ENCODE measurements at regions of chr5 and their contacts with region 1.

Region 1: GRCh38 chr5:170809551-170809950 is 26.0 kb downstream of the GABRP start:
- DNase-seq: peak in 1 of 2 experiments; percentile 49
- H3K4me3 ChIP-seq: no peak overlapping the region
- H3K27ac ChIP-seq: no peak overlapping the region
- H3K4me1 ChIP-seq: no peaks in the 10 kb centered on the region
- H3K27me3 ChIP-seq: no peaks in the 10 kb centered on the region
- CTCF ChIP-seq: peak; percentile 76

Region 2: DNA sequence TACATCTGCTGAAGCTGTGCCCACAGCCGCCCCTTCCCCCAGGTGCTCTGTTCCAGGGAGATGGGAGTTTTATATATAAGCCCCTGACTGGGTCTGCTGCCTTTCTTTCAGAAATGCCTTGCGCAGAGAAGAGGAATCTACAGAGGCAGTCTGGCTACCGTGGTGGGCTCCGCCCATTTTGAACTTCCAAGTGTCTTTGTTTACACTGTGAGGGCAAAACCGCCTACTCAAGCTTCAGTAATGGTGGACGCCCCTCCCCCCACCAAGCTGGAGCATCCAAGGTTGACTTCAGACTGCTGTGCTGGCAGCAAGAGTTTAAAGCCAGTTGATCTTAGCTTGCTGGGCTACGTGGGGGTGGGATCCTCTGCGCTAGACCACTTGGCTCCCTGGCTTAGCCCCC is 93.5 kb after region 1 on chr5:
- CTCF ChIA-PET with region 1: no interaction called
- POLR2A ChIA-PET with region 1: no interaction called
- intact Hi-C with region 1: no loop called
- DNase-seq: no peak
- H3K4me3 ChIP-seq: no peak overlapping the region
- H3K27ac ChIP-seq: no peak overlapping the region
- H3K4me1 ChIP-seq: no peaks in the 10 kb centered on the region
- H3K27me3 ChIP-seq: no peaks in the 10 kb centered on the region
- CTCF ChIP-seq: no peak

Region 3: GRCh38 chr5:170917113-170917512 is 107.6 kb after region 1 on chr5:
- CTCF ChIA-PET with region 1: interaction called, 4 read pairs
- POLR2A ChIA-PET with region 1: no interaction called
- intact Hi-C with region 1: loop called (anchors 5 kb)
- DNase-seq: no peak
- H3K4me3 ChIP-seq: no peak overlapping the region
- H3K27ac ChIP-seq: no peak overlapping the region
- H3K4me1 ChIP-seq: no peaks in the 10 kb centered on the region
- H3K27me3 ChIP-seq: no peaks in the 10 kb centered on the region
- CTCF ChIP-seq: peak; percentile 61

Region 4: DNA sequence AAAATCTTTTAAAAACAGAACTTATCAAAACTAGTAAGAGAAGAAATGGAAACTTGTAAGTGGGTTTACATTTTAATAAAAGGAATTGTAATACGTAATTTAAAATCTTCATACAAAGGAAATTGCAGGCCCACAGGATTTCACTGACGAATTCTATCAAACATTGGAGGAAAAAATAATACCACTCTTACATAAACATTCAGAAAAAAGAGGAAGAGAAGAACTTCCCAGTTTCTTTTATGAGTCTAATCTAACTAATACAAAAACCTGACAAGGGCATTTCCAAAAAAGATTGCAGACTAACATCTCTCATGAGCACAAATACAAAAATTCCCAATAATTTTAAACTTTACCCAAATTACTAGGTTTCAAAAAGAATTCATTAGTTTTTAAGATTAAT is 201.3 kb after region 1 on chr5:
- CTCF ChIA-PET with region 1: no interaction called
- POLR2A ChIA-PET with region 1: no interaction called
- intact Hi-C with region 1: no loop called
- DNase-seq: no peak
- H3K4me3 ChIP-seq: no peak overlapping the region
- H3K27ac ChIP-seq: no peak overlapping the region
- H3K4me1 ChIP-seq: no peaks in the 10 kb centered on the region
- H3K27me3 ChIP-seq: no peaks in the 10 kb centered on the region
- CTCF ChIP-seq: no peak

Region 5: DNA sequence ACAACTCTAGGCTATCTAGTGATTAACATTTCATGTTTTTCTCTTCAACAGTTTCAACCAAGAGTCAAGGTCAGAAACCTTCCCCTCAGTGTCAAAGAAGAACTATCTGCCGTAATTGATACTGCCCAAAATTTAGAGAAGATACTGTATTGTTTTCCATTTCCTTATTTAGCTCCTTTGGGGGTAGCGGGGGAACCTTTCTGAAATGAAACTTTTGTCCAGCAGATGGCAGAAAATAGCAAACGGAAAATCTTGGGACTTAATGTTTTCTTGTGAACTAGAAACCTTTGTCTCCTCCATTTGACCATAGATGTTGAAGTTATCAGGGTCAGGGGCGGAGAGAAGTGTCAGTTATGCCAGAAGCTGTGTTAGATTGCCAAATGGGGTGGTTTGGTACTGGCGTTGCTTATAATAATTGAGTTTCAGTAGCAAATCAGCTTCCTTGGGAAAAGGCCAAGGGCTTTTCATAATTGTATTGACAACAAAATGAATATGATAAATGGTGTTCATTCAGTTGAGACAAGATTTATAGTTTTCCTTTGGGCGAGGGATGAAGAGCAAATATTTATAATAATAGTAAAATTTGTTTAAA is 397.8 kb after region 1 on chr5:
- CTCF ChIA-PET with region 1: no interaction called
- POLR2A ChIA-PET with region 1: no interaction called
- intact Hi-C with region 1: loop called (anchors 2 kb)
- DNase-seq: peak in 1 of 2 experiments; percentile 33
- H3K4me3 ChIP-seq: no peak overlapping the region
- H3K27ac ChIP-seq: no peak overlapping the region
- H3K4me1 ChIP-seq: no peaks in the 10 kb centered on the region
- H3K27me3 ChIP-seq: no peaks in the 10 kb centered on the region
- CTCF ChIP-seq: peak; percentile 70

Region 6: GRCh38 chr5:171342362-171343111 is 533.0 kb after region 1 on chr5:
- CTCF ChIA-PET with region 1: no interaction called
- POLR2A ChIA-PET with region 1: no interaction called
- intact Hi-C with region 1: loop called (anchors 1 kb)
- DNase-seq: peak; percentile 39 to 47
- H3K4me3 ChIP-seq: no peak overlapping the region
- H3K27ac ChIP-seq: no peak overlapping the region
- H3K4me1 ChIP-seq: 0 out of 2 replicates have a peak, but pooled peaks cover 2% of the 10 kb centered on the region
- H3K27me3 ChIP-seq: no peaks in the 10 kb centered on the region
- CTCF ChIP-seq: peak; percentile 84